ENCODE measurements at regions of chr4 and their contacts with region 1.

Region 1: DNA sequence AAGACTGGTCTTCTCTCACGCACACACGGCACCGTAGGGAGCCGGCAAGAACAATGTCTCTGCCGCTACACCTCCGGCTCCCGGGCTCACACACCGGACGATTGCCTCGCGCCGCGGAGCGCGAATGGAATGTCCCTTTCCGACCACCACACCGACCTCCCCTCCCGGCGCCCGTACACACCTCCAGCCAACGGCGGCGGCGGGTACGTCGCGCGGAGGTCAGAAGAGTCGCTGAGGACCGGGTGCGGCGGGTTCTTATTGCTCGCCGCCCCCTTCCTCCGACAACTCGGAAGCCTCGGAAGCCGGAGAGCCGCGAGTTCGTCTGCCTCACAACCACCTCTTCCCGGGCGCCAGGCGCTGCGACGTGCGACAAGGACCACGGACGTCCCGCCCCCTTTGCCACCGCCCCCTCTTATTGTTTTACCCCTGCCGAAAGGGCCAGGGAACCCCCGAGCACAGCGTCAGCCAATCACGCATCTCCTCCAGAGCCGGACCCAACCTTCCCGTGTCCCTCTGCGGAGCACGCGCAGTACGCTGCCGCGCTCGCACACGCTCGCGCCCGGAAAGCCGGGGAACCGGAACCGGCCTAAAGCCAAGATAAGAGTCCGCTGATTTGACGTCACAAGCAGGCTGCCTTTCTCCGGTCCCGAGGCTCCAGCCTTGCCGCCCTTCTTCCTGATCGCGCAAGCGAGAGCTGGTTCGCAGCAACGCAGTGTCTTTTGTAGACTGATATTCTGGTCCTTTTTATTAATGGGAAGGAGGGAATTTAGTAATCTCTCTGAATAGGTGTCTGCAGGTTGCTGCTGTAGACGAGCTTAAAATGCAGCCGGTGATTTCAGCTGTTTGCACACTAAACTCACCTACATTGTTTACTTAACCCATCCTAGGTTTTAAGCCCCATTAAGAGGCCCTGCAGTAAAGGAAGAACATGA is at the start of gene G3BP2:
- DNase-seq: peak; percentile 99
- ATAC-seq: peak; percentile 99
- total RNA-seq, gene G3BP2: 65.5 TPM

Region 2: GRCh38 chr4:75514131-75514948 is 159.0 kb before region 1 on chr4 and contains the starts of genes RCHY1 and THAP6:
- intact Hi-C with region 1: loop called (anchors 5 kb)
- DNase-seq: peak; percentile 98
- ATAC-seq: peak; percentile 98
- total RNA-seq, gene RCHY1: 48.9 TPM
- total RNA-seq, gene THAP6: 20.8 TPM

Region 3: DNA sequence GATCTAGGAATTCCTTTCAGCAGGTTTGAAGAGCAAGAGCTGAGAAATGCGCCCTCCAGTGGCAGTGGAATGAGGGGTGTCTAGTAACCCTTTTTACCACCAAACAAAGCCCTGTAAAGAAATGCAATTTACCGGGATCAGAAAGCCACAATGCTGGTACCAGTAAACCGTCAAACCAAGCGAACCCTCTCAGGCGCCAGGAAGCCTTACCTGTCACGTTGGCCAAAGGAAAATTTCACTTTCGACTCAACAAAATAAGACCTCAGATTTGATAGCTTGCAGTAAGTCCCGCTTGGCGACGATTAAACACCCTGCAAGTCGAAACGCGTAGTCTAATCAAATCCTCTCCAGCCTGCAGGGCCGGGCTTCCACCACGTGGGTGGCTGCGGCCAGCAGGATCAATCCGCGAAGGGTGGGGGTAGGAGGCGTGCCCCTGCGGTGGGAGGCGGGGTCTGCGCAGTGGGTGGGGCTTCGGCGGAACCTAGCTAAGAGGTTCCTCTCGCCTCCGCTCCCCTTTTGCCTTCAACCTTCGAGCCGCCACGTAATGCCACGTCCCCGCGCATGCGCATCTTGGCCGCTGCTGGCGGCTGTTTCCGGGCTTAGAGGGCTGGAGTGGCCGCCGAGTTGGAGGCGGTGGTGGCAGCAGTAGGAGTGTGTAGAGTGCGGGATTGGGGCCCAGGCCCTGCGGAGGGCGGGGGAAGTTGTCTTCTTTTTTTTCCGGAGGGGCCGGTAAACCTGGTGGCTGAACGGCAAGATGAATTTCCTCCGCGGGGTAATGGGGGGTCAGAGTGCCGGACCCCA is 51.0 kb after region 1 on chr4 and contains the start of gene USO1:
- intact Hi-C with region 1: loop called (anchors 1 kb)
- DNase-seq: peak; percentile 99
- ATAC-seq: peak; percentile 99
- total RNA-seq, gene USO1: 85.0 TPM

Region 4: DNA sequence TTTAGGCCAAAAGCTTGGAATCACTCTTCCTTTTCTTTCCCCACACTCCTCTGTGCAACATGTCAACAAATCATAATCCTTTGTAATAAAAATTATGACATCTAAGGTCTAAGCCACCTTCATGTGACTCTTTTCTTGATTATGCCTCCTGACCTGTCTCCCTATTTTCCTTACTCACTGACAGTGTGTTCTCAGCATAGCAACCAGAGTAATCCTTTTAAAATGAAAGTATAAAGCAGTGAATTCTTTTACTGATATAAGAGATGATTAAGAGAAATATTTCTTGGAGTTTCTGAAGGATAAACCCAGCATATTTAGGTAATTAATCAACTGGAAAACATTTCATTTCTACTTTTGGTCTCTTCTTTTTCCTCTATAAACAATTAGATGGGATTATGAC is 95.7 kb after region 1 on chr4:
- intact Hi-C with region 1: no loop called
- DNase-seq: no peak
- ATAC-seq: no peak

Measured in Right ventricle myocardium inferior (tissue), 1 donor.